CD4-positive, alpha-beta T cell (primary cell): ENCODE measurements at regions of chr6 and their contacts with region 1.

Region 1: GRCh38 chr6:35624341-35625070 is 64.2 kb downstream of the FKBP5 start:
- DNase-seq: peak in 3 of 14 experiments; percentile 65 to 79 (median 78)
- ATAC-seq: peak; percentile 85
- H3K4me3 ChIP-seq: no peak overlapping the region
- H3K4me3 Mint-ChIP-seq: peak overlapping the region; percentile 30
- H3K27ac ChIP-seq: peak overlapping the region in 1 of 2 donors; percentile 29
- H3K27ac Mint-ChIP-seq: peak overlapping the region; percentile 72
- H3K4me1 ChIP-seq: peaks cover 31% of the 10 kb centered on the region
- H3K4me1 Mint-ChIP-seq: peaks cover 60% of the 10 kb centered on the region
- H3K27me3 ChIP-seq: no peaks in the 10 kb centered on the region
- H3K27me3 Mint-ChIP-seq: no peaks in the 10 kb centered on the region
- CTCF ChIP-seq: peak; percentile 81

Region 2: GRCh38 chr6:35522660-35523658 is 101.5 kb before region 1 on chr6:
- CTCF ChIA-PET with region 1: interaction called, 5 read pairs
- POLR2A ChIA-PET with region 1: no interaction called
- intact Hi-C with region 1: loop called (anchors 1 to 5 kb)
- DNase-seq: peak; percentile 61 to 91 (median 66)
- ATAC-seq: peak; percentile 88
- H3K4me3 ChIP-seq: peak overlapping the region; percentile 35
- H3K4me3 Mint-ChIP-seq: peak overlapping the region; percentile 79
- H3K27ac ChIP-seq: no peak overlapping the region
- H3K27ac Mint-ChIP-seq: peak overlapping the region; percentile 82
- H3K4me1 ChIP-seq: peaks cover 31% of the 10 kb centered on the region
- H3K4me1 Mint-ChIP-seq: peaks cover 14% of the 10 kb centered on the region
- H3K27me3 ChIP-seq: no peaks in the 10 kb centered on the region
- H3K27me3 Mint-ChIP-seq: no peaks in the 10 kb centered on the region
- CTCF ChIP-seq: peak; percentile 98

Region 3: DNA sequence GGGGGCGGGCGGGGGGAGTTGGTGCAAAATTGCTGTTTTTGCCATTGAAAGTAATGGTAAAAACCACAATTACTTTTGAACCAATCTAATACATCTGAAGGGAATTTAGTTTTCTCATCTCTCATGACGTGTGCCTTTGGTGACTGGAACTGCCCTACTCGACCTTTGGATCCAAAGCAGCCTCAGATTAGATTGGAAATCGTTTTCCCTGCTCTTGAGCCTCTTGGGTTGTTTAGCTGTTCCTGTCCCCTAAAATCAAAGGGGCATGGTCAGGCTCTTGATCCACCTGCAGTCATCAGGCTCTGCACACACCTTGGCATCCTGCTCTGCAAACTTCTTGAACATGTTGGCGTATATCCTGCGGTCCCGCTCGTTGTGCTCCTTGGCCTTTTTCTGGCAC is 47.8 kb before region 1 on chr6:
- CTCF ChIA-PET with region 1: interaction called, 19 read pairs
- POLR2A ChIA-PET with region 1: interaction called, 7 read pairs
- intact Hi-C with region 1: no loop called
- DNase-seq: no peak
- ATAC-seq: no peak
- H3K4me3 ChIP-seq: no peak overlapping the region
- H3K4me3 Mint-ChIP-seq: no peak overlapping the region
- H3K27ac ChIP-seq: no peak overlapping the region
- H3K27ac Mint-ChIP-seq: peak overlapping the region; percentile 17
- H3K4me1 ChIP-seq: peaks cover 4% of the 10 kb centered on the region
- H3K4me1 Mint-ChIP-seq: peaks cover 8% of the 10 kb centered on the region
- H3K27me3 ChIP-seq: no peaks in the 10 kb centered on the region
- H3K27me3 Mint-ChIP-seq: no peaks in the 10 kb centered on the region
- CTCF ChIP-seq: no peak

Region 4: GRCh38 chr6:35583893-35584688 is 40.4 kb before region 1 on chr6:
- CTCF ChIA-PET with region 1: interaction called, 65 read pairs
- POLR2A ChIA-PET with region 1: interaction called, 61 read pairs
- intact Hi-C with region 1: loop called (anchors 1 kb)
- DNase-seq: peak; percentile 61 to 89 (median 70)
- ATAC-seq: peak; percentile 81
- H3K4me3 ChIP-seq: no peak overlapping the region
- H3K4me3 Mint-ChIP-seq: peak overlapping the region; percentile 69
- H3K27ac ChIP-seq: no peak overlapping the region
- H3K27ac Mint-ChIP-seq: peak overlapping the region; percentile 80
- H3K4me1 ChIP-seq: peaks cover 33% of the 10 kb centered on the region
- H3K4me1 Mint-ChIP-seq: peaks cover 68% of the 10 kb centered on the region
- H3K27me3 ChIP-seq: no peaks in the 10 kb centered on the region
- H3K27me3 Mint-ChIP-seq: no peaks in the 10 kb centered on the region
- CTCF ChIP-seq: peak; percentile 94

Region 5: GRCh38 chr6:35590622-35591066 is 33.9 kb before region 1 on chr6:
- CTCF ChIA-PET with region 1: interaction called, 65 read pairs
- POLR2A ChIA-PET with region 1: interaction called, 61 read pairs
- intact Hi-C with region 1: no loop called
- DNase-seq: no peak
- ATAC-seq: no peak
- H3K4me3 ChIP-seq: no peak overlapping the region
- H3K4me3 Mint-ChIP-seq: no peak overlapping the region
- H3K27ac ChIP-seq: no peak overlapping the region
- H3K27ac Mint-ChIP-seq: peak overlapping the region; percentile 85
- H3K4me1 ChIP-seq: peaks cover 72% of the 10 kb centered on the region
- H3K4me1 Mint-ChIP-seq: peaks cover 93% of the 10 kb centered on the region
- H3K27me3 ChIP-seq: no peaks in the 10 kb centered on the region
- H3K27me3 Mint-ChIP-seq: no peaks in the 10 kb centered on the region
- CTCF ChIP-seq: no peak

Region 6: GRCh38 chr6:35601331-35602132 is 23.0 kb before region 1 on chr6:
- CTCF ChIA-PET with region 1: interaction called, 33 read pairs
- POLR2A ChIA-PET with region 1: interaction called, 162 read pairs
- intact Hi-C with region 1: loop called in 1 of 2 experiments (anchors 2 kb)
- DNase-seq: peak; percentile 50 to 93 (median 64)
- ATAC-seq: peak; percentile 74
- H3K4me3 ChIP-seq: peak overlapping the region; percentile 42
- H3K4me3 Mint-ChIP-seq: peak overlapping the region; percentile 82
- H3K27ac ChIP-seq: peak overlapping the region; percentile 52 to 82
- H3K27ac Mint-ChIP-seq: peak overlapping the region; percentile 85
- H3K4me1 ChIP-seq: peaks cover 70% of the 10 kb centered on the region
- H3K4me1 Mint-ChIP-seq: peaks cover 87% of the 10 kb centered on the region
- H3K27me3 ChIP-seq: no peaks in the 10 kb centered on the region
- H3K27me3 Mint-ChIP-seq: no peaks in the 10 kb centered on the region
- CTCF ChIP-seq: no peak

Region 7: GRCh38 chr6:35640017-35640664 is 15.6 kb after region 1 on chr6:
- CTCF ChIA-PET with region 1: interaction called, 13 read pairs
- POLR2A ChIA-PET with region 1: interaction called, 3 read pairs
- intact Hi-C with region 1: no loop called
- DNase-seq: no peak
- ATAC-seq: no peak
- H3K4me3 ChIP-seq: no peak overlapping the region
- H3K4me3 Mint-ChIP-seq: no peak overlapping the region
- H3K27ac ChIP-seq: no peak overlapping the region
- H3K27ac Mint-ChIP-seq: peak overlapping the region; percentile 81
- H3K4me1 ChIP-seq: peaks cover 9% of the 10 kb centered on the region
- H3K4me1 Mint-ChIP-seq: peaks cover 71% of the 10 kb centered on the region
- H3K27me3 ChIP-seq: no peaks in the 10 kb centered on the region
- H3K27me3 Mint-ChIP-seq: no peaks in the 10 kb centered on the region
- CTCF ChIP-seq: no peak